Activated B cell treated with CpG ODN at 0.5 μM for 24 hours (primary cell): ENCODE measurements at regions of chr3 and their contacts with region 1.

Region 1: DNA sequence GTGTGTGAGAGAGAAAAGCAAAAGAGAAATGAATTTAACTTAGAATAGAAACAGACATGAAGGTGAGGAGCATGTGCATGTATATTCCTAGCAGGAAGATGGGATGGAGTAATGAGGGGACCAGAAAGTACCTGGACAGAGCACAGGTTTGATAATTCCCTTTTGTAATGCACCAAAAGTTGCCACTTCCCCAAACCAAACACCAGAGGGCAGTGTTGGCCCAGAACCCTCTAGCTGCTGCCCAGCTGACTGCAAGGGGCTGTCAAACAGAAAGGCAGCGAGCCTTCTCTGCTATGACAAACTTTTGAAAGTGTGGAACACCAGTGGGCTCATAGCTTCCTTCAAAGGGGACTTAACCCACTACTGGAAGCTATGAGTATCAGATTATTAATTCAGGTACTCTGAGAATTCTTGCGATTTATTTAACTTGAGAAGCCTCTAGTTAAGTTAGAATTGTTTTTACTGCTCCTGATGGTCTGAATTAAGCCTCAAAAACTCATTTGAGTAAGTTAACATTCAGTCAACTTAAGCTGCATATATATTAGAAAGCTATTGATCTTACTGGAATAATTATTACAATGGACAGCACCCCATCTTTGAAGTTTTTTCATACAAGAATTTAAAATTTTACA is 234.9 kb downstream of the NEK10 start:
- DNase-seq: peak; percentile 27
- ATAC-seq: peak; percentile 71
- H3K4me3 Mint-ChIP-seq: no peak overlapping the region
- H3K27ac Mint-ChIP-seq: no peak overlapping the region
- H3K4me1 Mint-ChIP-seq: no peaks in the 10 kb centered on the region
- H3K27me3 Mint-ChIP-seq: no peaks in the 10 kb centered on the region
- CTCF ChIP-seq: peak; percentile 83

Region 2: DNA sequence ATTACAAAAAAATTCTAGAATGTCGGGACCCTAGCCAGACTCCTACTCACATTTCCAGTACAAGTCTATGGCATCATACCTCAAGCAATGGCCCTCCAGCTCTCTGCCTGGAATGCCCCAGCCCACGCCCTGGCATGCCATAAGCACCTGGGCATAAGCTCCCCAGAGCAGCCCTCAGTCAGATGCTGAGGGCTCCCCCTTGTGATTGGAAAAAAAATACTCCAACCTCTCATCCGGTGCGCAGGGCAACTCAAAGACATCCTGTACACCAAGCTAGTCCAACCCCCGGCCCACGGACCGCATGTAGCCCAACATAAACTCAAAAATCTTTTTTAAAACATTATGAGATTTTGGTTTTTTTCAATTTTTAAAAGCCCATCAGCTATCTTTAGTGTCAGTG is 119.5 kb after region 1 on chr3:
- CTCF ChIA-PET with region 1: interaction called, 7 read pairs
- POLR2A ChIA-PET with region 1: no interaction called
- intact Hi-C with region 1: loop called (anchors 1 kb)
- DNase-seq: no peak
- ATAC-seq: no peak
- H3K4me3 Mint-ChIP-seq: no peak overlapping the region
- H3K27ac Mint-ChIP-seq: no peak overlapping the region
- H3K4me1 Mint-ChIP-seq: no peaks in the 10 kb centered on the region
- H3K27me3 Mint-ChIP-seq: peaks cover 8% of the 10 kb centered on the region
- CTCF ChIP-seq: no peak